Heart right ventricle (tissue), 16 donors: ENCODE measurements at regions of chr3 and their contacts with region 1.

Region 1: DNA sequence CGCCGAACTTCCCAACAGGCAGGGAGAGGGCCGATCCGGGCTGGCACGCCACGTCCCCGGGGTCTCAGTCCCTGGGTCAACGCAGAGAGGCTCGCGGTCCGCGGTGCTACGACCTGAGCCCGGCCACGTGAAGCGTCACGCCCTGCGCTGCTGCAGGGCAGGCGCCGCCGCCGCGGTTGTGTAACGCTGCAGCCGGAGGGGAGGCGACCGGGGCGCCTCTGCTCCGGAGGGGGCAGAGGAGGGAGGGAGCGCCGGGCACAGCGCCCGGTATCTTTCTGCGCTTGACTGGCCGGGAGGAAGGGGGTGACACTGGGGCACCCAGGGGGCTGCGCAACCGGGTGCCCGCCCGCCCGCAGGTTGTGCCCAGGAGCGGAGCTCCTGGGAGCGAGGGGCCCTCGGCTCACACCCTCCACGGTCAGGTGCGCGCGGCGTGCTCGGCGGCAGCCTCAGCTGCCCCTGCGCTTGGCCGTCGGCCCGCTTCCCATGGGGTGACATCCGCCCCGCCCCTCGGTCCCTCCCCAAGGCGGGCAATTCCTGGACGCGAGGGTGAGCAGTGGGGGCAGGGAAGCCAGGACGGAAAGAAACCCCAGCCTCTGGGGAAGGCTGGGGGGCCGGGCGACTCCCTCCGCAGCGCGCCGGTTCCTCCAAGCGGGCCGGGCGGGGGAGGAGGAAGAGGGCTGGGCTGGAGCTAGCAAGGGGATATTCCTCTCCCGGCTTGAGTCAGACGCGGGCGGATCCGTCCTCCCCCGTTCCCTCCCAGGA is 852 bp upstream of the BHLHE40 start:
- DNase-seq: peak; percentile 96 to 99
- ATAC-seq: peak; percentile 75 to 88 (median 80)
- H3K4me3 ChIP-seq: peak overlapping the region; percentile 47 to 98 (median 86)
- H3K27ac ChIP-seq: peak overlapping the region; percentile 97 to 100 (median 100)
- H3K4me1 ChIP-seq: peaks cover 4 to 48% (median 34%) of the 10 kb centered on the region in 9 donors
- H3K27me3 ChIP-seq: no peaks in the 10 kb centered on the region
- CTCF ChIP-seq: peak in 2 of 9 donors; percentile 8 to 17

Region 2: GRCh38 chr3:4712143-4712542 is 266.2 kb before region 1 on chr3:
- intact Hi-C with region 1: loop called in 4 of 10 experiments (anchors 5 kb)
- DNase-seq: no peak
- ATAC-seq: peak in 2 of 8 donors; percentile 36 to 39
- H3K4me3 ChIP-seq: no peak overlapping the region
- H3K27ac ChIP-seq: peak overlapping the region in 1 of 10 donors; percentile 68
- H3K4me1 ChIP-seq: peaks cover 0 to 28% (median 5%) of the 10 kb centered on the region in 9 donors
- H3K27me3 ChIP-seq: no peaks in the 10 kb centered on the region
- CTCF ChIP-seq: no peak

Region 3: GRCh38 chr3:4741404-4742307 is 236.7 kb before region 1 on chr3:
- intact Hi-C with region 1: loop called in 3 of 10 experiments (anchors 2 to 5 kb)
- DNase-seq: peak; percentile 41 to 87
- ATAC-seq: peak; percentile 80 to 92 (median 86)
- H3K4me3 ChIP-seq: no peak overlapping the region
- H3K27ac ChIP-seq: peak overlapping the region; percentile 61 to 97 (median 87)
- H3K4me1 ChIP-seq: peaks cover 10 to 93% (median 47%) of the 10 kb centered on the region in 9 donors
- H3K27me3 ChIP-seq: no peaks in the 10 kb centered on the region
- CTCF ChIP-seq: no peak

Region 4: GRCh38 chr3:4831580-4831950 is 146.8 kb before region 1 on chr3:
- intact Hi-C with region 1: loop called in 7 of 10 experiments (anchors 1 to 5 kb)
- DNase-seq: no peak
- ATAC-seq: peak in 2 of 8 donors; percentile 16 to 17
- H3K4me3 ChIP-seq: peak overlapping the region in 1 of 10 donors; percentile 1
- H3K27ac ChIP-seq: peak overlapping the region; percentile 16 to 86 (median 69)
- H3K4me1 ChIP-seq: peaks cover 5 to 84% (median 26%) of the 10 kb centered on the region in 9 donors
- H3K27me3 ChIP-seq: no peaks in the 10 kb centered on the region
- CTCF ChIP-seq: no peak

Region 5: GRCh38 chr3:5016218-5017161 is 38.1 kb after region 1 on chr3:
- intact Hi-C with region 1: loop called in 1 of 10 experiments (anchors 5 kb)
- DNase-seq: peak in 1 of 2 donors; percentile 65
- ATAC-seq: peak; percentile 36 to 81 (median 72)
- H3K4me3 ChIP-seq: no peak overlapping the region
- H3K27ac ChIP-seq: peak overlapping the region in 7 of 10 donors; percentile 57 to 86 (median 79)
- H3K4me1 ChIP-seq: peaks cover 11 to 80% (median 45%) of the 10 kb centered on the region in 9 donors
- H3K27me3 ChIP-seq: no peaks in the 10 kb centered on the region
- CTCF ChIP-seq: no peak

Region 6: DNA sequence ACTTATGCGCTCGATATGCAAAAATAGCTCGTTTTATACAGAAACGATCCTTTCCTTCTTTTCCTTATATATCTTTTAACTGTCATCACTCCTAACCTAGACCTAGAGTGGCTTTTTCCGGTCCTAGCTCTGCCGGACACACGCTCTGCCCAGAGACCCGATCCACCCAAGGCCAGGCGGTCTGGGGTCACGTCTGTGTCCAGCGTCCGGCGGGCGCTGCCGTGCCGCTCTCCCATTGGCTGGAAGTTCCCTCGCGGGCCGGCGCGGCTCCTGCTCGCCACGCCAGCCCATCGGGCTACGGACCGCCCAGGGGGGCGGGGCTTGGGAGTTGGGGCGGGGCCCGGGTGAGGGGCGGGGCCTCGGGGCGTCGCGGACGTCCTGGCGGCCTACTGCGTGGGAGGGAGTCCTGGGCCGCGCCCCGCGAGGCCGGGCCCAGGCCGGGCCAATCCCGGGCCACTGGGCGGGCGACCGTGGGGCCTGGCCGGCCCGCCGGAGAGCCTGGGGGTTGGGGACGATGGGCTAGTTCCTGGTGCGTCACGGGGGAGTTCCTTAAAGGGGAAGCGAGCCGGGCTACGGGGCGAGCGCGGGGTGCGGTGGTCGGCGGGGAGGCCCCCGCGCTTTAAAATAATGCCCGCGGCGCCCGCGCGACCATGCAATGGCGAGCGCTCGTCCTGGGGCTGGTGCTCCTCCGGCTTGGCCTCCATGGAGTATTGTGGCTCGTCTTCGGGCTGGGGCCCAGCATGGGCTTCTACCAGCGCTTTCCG is 209.0 kb after region 1 on chr3 and contains the start of gene EDEM1:
- intact Hi-C with region 1: loop called in 1 of 10 experiments (anchors 5 kb)
- DNase-seq: peak; percentile 93 to 97
- ATAC-seq: peak; percentile 96 to 99 (median 97)
- H3K4me3 ChIP-seq: peak within 1 kb of the TSS; percentile 51 to 98 (median 94)
- H3K27ac ChIP-seq: peak within 1 kb of the TSS; percentile 61 to 99 (median 95)
- H3K4me1 ChIP-seq: peaks cover 0 to 79% (median 40%) of the 10 kb centered on the region in 9 donors
- H3K27me3 ChIP-seq: no peaks in the 10 kb centered on the region
- CTCF ChIP-seq: no peak
- total RNA-seq, gene EDEM1: 6.7 to 19.0 (median 9.1) TPM